ENCODE measurements at regions of chr9 and their contacts with region 1.

Region 1: GRCh38 chr9:74824654-74825053 is 63.1 kb downstream of the TRPM6 start:
- DNase-seq: no peak
- ATAC-seq: peak in 1 of 2 donors; percentile 33
- H3K4me3 ChIP-seq: no peak overlapping the region
- H3K27ac ChIP-seq: no peak overlapping the region
- H3K4me1 ChIP-seq: peaks cover 0 to 3% of the 10 kb centered on the region in 2 donors
- H3K27me3 ChIP-seq: no peaks in the 10 kb centered on the region
- CTCF ChIP-seq: no peak
- POLR2A ChIP-seq: no peak

Region 2: DNA sequence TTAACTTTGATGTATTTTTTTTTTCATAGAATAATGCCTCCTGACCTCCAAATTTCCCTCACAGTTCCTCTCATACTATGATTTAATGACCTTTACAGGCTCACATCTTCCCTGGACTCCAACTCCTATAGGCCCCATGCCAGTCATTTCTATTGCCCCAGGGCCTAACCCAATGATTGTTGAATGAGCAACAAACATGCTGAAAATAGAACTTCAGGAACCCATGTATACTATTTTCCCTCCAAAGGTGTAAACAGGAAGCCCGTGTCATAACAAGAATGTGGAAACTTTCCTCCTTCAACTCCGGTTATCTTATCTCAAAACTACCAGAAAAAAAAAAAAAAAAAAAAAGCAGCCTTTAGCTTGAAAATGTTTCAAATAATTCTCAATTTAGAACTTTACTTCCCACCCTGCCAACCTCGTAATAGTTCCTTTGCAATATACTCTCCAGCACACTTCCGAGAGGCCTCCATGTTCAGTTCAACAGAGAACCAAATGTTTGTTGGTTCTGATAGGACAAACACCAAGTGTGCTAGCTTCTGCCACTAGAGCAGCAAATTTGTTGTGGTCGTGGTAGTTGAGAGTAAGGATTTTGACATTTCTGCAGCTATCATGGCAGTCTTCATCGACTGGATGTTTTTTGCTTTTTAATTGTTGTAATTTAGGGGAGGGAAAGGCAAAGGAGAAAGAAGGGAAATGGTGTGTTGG is 37.3 kb after region 1 on chr9:
- in situ Hi-C with region 1: no loop called
- intact Hi-C with region 1: loop called (anchors 1 kb)
- DNase-seq: no peak
- ATAC-seq: no peak
- H3K4me3 ChIP-seq: no peak overlapping the region
- H3K27ac ChIP-seq: peak overlapping the region in 1 of 4 donors; percentile 24
- H3K4me1 ChIP-seq: no peaks in the 10 kb centered on the region
- H3K27me3 ChIP-seq: no peaks in the 10 kb centered on the region
- CTCF ChIP-seq: no peak
- POLR2A ChIP-seq: no peak

Measured in gastrocnemius medialis (tissue), 4 donors.